Endothelial cell of umbilical vein (primary cell): ENCODE measurements at regions of chr6 and their contacts with region 1.

Region 1: GRCh38 chr6:17803409-17803808 is 96.7 kb upstream of the NUP153 start:
- DNase-seq: no peak
- H3K4me3 ChIP-seq: no peak overlapping the region
- H3K27ac ChIP-seq: no peak overlapping the region
- H3K4me1 ChIP-seq: peaks cover under 1% of the 10 kb centered on the region
- H3K27me3 ChIP-seq: no peaks in the 10 kb centered on the region
- CTCF ChIP-seq: no peak
- POLR2A ChIP-seq: no peak

Region 2: GRCh38 chr6:17599885-17600526 is 203.4 kb before region 1 on chr6 and contains the start of gene FAM8A1:
- CTCF ChIA-PET with region 1: interaction called, 4 read pairs
- POLR2A ChIA-PET with region 1: no interaction called
- dilution Hi-C with region 1: no loop called
- intact Hi-C with region 1: loop called (anchors 5 kb)
- DNase-seq: peak; percentile 84
- H3K4me3 ChIP-seq: peak within 1 kb of the TSS; percentile 42 to 94 (median 91)
- H3K27ac ChIP-seq: peak within 1 kb of the TSS; percentile 84
- H3K4me1 ChIP-seq: peaks cover 5% of the 10 kb centered on the region
- H3K27me3 ChIP-seq: no peaks in the 10 kb centered on the region
- CTCF ChIP-seq: peak in 1 of 2 donors; percentile 69
- POLR2A ChIP-seq: peak; percentile 62
- total RNA-seq, gene FAM8A1: 11.3 and 11.5 TPM in 2 replicates

Region 3: DNA sequence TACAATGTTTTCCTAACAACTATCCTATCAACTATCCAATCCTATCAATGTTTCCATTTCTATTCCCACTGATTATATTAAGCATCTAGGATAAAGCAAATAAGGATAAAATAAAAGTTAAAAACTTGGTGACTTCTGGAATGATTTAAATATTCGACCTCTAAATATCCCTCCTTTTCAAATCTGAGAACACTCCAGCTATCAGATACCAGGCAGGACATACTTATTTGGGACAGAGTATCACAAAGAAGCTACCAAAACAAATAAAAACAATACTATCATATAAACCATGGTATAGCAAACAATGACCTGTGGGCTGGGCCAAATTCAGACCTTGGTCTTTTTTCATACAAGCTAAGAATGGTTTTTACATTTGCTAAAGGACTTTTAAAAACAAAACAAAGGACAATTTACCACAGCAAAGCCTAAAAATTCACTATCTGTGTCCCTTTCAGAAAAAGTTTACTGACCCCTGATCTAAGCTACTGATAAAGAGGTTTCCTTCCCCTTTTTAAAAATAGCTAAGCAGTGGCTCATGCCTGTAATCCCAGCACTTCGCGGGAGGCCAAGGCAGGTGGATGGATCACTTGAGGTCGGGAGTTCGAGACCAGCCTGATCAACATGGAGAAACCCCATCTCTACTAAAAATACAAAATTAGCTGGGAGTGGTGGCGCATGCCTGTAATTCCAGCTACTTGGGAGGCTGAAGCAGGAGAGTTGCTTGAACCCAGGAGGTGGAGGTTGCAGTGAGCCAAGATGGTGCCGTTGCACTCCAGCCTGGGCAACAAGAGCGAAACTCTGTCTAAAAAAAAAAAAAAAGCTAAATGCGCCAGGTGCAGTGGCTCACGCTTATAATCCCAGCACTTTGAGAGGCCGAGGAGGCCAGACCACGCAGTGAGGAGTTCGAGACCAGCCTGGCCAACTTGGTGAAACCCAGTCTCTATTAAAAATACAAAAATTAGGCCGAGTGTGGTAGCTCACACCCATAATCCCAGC is 102.7 kb before region 1 on chr6:
- CTCF ChIA-PET with region 1: interaction called, 27 read pairs
- POLR2A ChIA-PET with region 1: no interaction called
- dilution Hi-C with region 1: no loop called
- intact Hi-C with region 1: loop called (anchors 1 kb)
- DNase-seq: no peak
- H3K4me3 ChIP-seq: no peak overlapping the region
- H3K27ac ChIP-seq: peak overlapping the region; percentile 11
- H3K4me1 ChIP-seq: peaks cover 36% of the 10 kb centered on the region
- H3K27me3 ChIP-seq: no peaks in the 10 kb centered on the region
- CTCF ChIP-seq: no peak
- POLR2A ChIP-seq: no peak

Region 4: DNA sequence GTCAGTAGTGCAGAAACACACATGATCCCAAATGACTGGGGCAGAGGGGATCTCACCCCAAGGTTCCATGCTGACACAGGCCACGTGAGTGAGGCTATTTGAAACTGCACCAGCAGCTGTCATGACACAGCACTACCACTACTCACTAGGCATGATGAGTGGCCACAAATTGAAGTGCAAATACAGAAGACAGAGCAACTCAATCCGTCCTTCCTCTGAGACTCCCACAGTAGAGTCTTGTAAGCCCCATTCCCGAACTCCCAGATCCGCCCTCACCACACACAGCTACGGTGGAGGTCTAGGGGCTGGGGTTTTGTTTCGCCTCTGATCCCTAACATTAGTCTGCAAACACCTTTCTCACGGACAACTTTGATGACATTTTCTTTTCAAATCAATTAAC is 16.6 kb after region 1 on chr6:
- CTCF ChIA-PET with region 1: interaction called, 31 read pairs
- POLR2A ChIA-PET with region 1: no interaction called
- dilution Hi-C with region 1: no loop called
- intact Hi-C with region 1: no loop called
- DNase-seq: no peak
- H3K4me3 ChIP-seq: no peak overlapping the region
- H3K27ac ChIP-seq: no peak overlapping the region
- H3K4me1 ChIP-seq: no peaks in the 10 kb centered on the region
- H3K27me3 ChIP-seq: no peaks in the 10 kb centered on the region
- CTCF ChIP-seq: no peak
- POLR2A ChIP-seq: no peak